Psoas muscle (tissue), 8 donors: ENCODE measurements at regions of chr15 and their contacts with region 1.

Region 1: DNA sequence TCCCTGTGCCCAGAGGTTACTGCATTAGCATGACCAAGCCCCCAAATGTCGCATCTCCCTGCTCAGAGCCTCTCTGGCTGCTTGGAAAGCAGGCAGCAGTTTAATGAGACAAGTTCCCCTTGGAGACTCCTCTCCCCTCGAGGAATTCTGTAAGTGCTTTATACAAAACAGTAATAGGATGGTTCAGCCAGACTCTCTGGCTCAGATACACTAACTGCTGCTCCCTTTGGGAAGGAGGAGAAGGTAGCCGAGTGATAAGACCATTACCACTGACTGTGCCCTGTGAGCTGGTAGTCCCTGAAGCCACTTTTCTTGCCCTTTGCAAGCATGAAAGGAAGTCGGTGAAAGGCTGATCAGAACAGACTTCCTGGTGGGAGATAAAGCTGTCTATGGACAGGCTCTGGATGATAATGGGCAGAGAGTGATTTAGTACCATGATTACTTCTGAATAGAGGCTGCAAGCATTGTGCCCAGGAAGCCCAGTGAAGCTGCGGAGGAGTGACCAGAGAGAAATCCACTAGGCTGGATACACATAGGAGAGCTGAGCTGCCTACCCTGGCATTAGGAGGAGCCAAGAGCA is 100.8 kb downstream of the SEMA6D start:
- DNase-seq: no peak
- ATAC-seq: no peak
- H3K4me3 ChIP-seq: no peak overlapping the region
- H3K27ac ChIP-seq: no peak overlapping the region
- H3K4me1 ChIP-seq: peaks cover 17% of the 10 kb centered on the region
- H3K27me3 ChIP-seq: no peaks in the 10 kb centered on the region
- CTCF ChIP-seq: no peak

Region 2: DNA sequence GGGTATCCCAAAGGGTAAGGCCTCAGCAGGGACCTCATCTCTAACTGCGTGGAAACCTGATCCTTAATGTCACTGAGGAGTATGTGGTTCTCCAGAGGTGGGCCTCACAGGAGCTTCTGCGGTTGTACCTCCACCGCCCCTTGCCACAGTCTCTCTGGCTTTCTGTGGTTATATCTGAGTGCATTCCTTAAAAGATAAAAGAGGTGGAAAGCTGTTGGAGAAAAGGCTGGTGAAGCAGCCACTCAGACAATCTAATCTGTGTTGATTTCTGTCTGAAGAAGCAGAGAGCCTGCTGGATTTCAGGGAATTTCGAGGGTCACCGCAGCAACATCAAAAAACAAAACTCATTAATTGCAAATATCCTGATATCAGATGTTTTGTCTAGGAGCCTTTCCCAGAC is 49.3 kb before region 1 on chr15:
- intact Hi-C with region 1: loop called in 1 of 2 experiments (anchors 5 kb)
- DNase-seq: no peak
- ATAC-seq: no peak
- H3K4me3 ChIP-seq: no peak overlapping the region
- H3K27ac ChIP-seq: peak overlapping the region; percentile 5
- H3K4me1 ChIP-seq: peaks cover 13% of the 10 kb centered on the region
- H3K27me3 ChIP-seq: no peaks in the 10 kb centered on the region
- CTCF ChIP-seq: no peak